Panc1 (cell line): ENCODE measurements at regions of chr19 and their contacts with region 1.

Region 1: GRCh38 chr19:39031368-39032062 is 834 bp downstream of the FBXO27 start:
- DNase-seq: peak; percentile 100
- ATAC-seq: peak; percentile 93
- H3K4me3 ChIP-seq: peak overlapping the region; percentile 46 to 72
- H3K27ac ChIP-seq: peak overlapping the region; percentile 91
- H3K4me1 ChIP-seq: peaks cover 24% of the 10 kb centered on the region
- H3K27me3 ChIP-seq: no peaks in the 10 kb centered on the region
- CTCF ChIP-seq: no peak

Region 2: GRCh38 chr19:38949580-38950367 is 81.7 kb before region 1 on chr19:
- CTCF ChIA-PET with region 1: no interaction called
- POLR2A ChIA-PET with region 1: no interaction called
- in situ Hi-C with region 1: no loop called
- intact Hi-C with region 1: no loop called
- DNase-seq: no peak
- ATAC-seq: peak; percentile 28
- H3K4me3 ChIP-seq: no peak overlapping the region
- H3K27ac ChIP-seq: no peak overlapping the region
- H3K4me1 ChIP-seq: no peaks in the 10 kb centered on the region
- H3K27me3 ChIP-seq: no peaks in the 10 kb centered on the region
- CTCF ChIP-seq: no peak

Region 3: GRCh38 chr19:39001041-39001440 is 30.5 kb before region 1 on chr19:
- CTCF ChIA-PET with region 1: no interaction called
- POLR2A ChIA-PET with region 1: interaction called, 11 read pairs
- in situ Hi-C with region 1: no loop called
- intact Hi-C with region 1: no loop called
- DNase-seq: no peak
- ATAC-seq: peak; percentile 44
- H3K4me3 ChIP-seq: no peak overlapping the region
- H3K27ac ChIP-seq: no peak overlapping the region
- H3K4me1 ChIP-seq: no peaks in the 10 kb centered on the region
- H3K27me3 ChIP-seq: no peaks in the 10 kb centered on the region
- CTCF ChIP-seq: no peak

Region 4: GRCh38 chr19:39014037-39014436 is 17.5 kb before region 1 on chr19:
- CTCF ChIA-PET with region 1: interaction called, 3 read pairs
- POLR2A ChIA-PET with region 1: interaction called, 14 read pairs
- in situ Hi-C with region 1: no loop called
- intact Hi-C with region 1: no loop called
- DNase-seq: no peak
- ATAC-seq: peak; percentile 43
- H3K4me3 ChIP-seq: no peak overlapping the region
- H3K27ac ChIP-seq: no peak overlapping the region
- H3K4me1 ChIP-seq: no peaks in the 10 kb centered on the region
- H3K27me3 ChIP-seq: no peaks in the 10 kb centered on the region
- CTCF ChIP-seq: no peak

Region 5: GRCh38 chr19:39021063-39021462 is 10.5 kb before region 1 on chr19:
- CTCF ChIA-PET with region 1: interaction called, 4 read pairs
- POLR2A ChIA-PET with region 1: interaction called, 11 read pairs
- in situ Hi-C with region 1: no loop called
- intact Hi-C with region 1: no loop called
- DNase-seq: no peak
- ATAC-seq: no peak
- H3K4me3 ChIP-seq: no peak overlapping the region
- H3K27ac ChIP-seq: no peak overlapping the region
- H3K4me1 ChIP-seq: no peaks in the 10 kb centered on the region
- H3K27me3 ChIP-seq: no peaks in the 10 kb centered on the region
- CTCF ChIP-seq: no peak

Region 6: GRCh38 chr19:39237200-39238184 is 206.0 kb after region 1 on chr19:
- CTCF ChIA-PET with region 1: no interaction called
- POLR2A ChIA-PET with region 1: no interaction called
- in situ Hi-C with region 1: no loop called
- intact Hi-C with region 1: no loop called
- DNase-seq: no peak
- ATAC-seq: peak; percentile 73
- H3K4me3 ChIP-seq: peak overlapping the region in 1 of 2 experiments; percentile 23; a peak in 2 of 4 replicates
- H3K27ac ChIP-seq: no peak overlapping the region
- H3K4me1 ChIP-seq: no peaks in the 10 kb centered on the region
- H3K27me3 ChIP-seq: no peaks in the 10 kb centered on the region
- CTCF ChIP-seq: no peak

Region 7: GRCh38 chr19:39428283-39429112 is 397.0 kb after region 1 on chr19:
- CTCF ChIA-PET with region 1: no interaction called
- POLR2A ChIA-PET with region 1: no interaction called
- in situ Hi-C with region 1: no loop called
- intact Hi-C with region 1: loop called (anchors 5 kb)
- DNase-seq: peak; percentile 92
- ATAC-seq: peak; percentile 70
- H3K4me3 ChIP-seq: peak overlapping the region; percentile 0 to 17; a peak in 3 of 4 replicates
- H3K27ac ChIP-seq: peak overlapping the region; percentile 86
- H3K4me1 ChIP-seq: peaks cover 75% of the 10 kb centered on the region
- H3K27me3 ChIP-seq: no peaks in the 10 kb centered on the region
- CTCF ChIP-seq: no peak